ENCODE measurements at regions of chr1 and their contacts with region 1.

Region 1: GRCh38 chr1:26900001-26900814 is at the start of gene GPATCH3:
- DNase-seq: peak; percentile 90
- H3K4me3 Mint-ChIP-seq: peak within 1 kb of the TSS; percentile 82
- H3K27ac Mint-ChIP-seq: peak within 1 kb of the TSS; percentile 92
- H3K4me1 Mint-ChIP-seq: peaks cover 39% of the 10 kb centered on the region
- H3K27me3 Mint-ChIP-seq: no peaks in the 10 kb centered on the region
- total RNA-seq, gene GPATCH3: 16.0 to 16.7 TPM

Region 2: DNA sequence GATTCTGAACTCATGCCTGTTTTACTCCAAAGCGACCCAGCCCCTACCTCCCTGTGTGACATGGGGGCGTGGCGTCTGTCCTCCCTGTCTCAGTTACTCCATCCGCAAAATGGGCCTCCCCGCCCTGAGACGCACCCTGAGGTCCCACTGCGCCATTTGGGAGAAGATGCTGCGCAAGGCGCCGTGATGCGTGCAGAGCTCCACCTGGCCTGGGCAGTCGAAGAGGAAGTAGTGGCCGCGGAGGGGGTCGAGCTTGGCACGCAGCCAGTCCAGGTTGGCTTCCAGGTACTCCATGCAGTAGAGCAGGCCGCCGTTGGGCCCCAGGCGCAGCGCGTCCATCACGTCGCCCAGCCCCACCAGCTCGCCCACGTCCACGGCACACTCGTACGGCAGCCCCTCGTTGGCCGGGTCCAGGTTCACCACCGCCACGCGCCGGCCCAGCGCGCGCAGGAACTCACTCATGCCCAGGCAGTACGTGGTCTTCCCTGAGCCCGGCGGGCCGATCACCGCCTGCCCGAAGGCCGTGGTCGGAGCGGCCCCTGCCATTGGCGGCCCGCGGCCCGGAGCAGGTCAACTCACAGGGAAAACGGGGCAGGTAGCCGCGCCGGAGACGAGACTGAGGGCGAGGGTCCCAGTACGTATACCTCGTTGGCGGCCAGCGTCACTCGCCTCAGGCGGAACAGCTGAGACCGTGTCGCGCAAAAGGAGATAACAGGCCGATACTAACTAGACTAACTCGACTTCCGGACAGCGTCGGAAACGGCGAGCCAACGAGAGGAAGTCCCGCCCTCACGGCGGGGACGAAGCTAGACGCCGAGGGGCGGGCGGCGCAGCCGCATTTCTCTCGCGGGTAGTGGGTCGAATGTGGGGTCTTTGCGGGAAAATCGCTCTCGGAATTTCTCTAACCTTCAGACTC is 10.4 kb before region 1 on chr1 and contains the start of gene GPN2:
- CTCF ChIA-PET with region 1: interaction called, 12 read pairs
- POLR2A ChIA-PET with region 1: interaction called, 97 read pairs
- DNase-seq: peak; percentile 82
- H3K4me3 Mint-ChIP-seq: peak within 1 kb of the TSS; percentile 99
- H3K27ac Mint-ChIP-seq: peak within 1 kb of the TSS; percentile 94
- H3K4me1 Mint-ChIP-seq: peaks cover 28% of the 10 kb centered on the region
- H3K27me3 Mint-ChIP-seq: no peaks in the 10 kb centered on the region
- total RNA-seq, gene GPN2: 29.4 to 31.4 TPM

Region 3: DNA sequence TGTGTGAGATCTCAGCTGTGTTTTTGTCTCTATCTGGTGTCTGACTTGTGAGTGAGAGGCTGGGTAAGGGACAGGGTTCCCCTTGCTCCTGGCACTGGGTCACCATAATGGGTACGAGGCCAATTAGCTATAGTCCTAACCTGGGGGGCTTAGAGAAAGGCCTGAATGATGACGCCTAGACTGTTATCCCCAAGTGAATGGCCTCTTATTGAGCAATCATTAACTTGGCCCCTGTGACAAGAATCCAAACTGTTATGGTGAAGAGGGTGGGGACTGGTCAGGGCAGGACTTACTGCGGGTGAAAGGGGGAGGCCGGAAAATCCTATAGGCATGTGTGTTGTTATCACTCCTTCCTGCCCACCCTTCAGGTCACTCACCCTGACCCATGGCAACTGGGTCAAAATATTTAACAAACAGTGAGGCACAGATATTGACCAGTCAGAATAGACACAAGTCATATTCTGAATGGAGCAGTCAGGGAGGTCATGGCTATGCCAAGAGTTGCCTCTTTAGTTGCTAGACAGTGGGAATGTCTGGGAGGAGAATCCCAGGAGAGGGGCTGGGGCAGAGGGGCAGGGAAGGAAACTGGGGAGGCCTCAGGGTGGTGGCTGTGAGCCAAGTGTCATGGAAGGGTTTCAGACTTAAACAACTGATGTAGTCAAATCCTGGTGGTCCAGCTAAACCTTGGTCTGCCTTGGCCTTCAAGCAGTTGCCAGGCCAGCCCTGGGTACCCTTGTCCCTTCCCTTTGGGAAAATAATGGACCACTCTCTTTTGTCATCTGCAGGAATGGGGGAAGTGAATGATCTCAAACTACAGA is 10.3 kb after region 1 on chr1:
- CTCF ChIA-PET with region 1: interaction called, 4 read pairs
- POLR2A ChIA-PET with region 1: interaction called, 15 read pairs
- DNase-seq: no peak
- H3K4me3 Mint-ChIP-seq: no peak overlapping the region
- H3K27ac Mint-ChIP-seq: no peak overlapping the region
- H3K4me1 Mint-ChIP-seq: no peaks in the 10 kb centered on the region
- H3K27me3 Mint-ChIP-seq: peaks cover 11% of the 10 kb centered on the region

Region 4: DNA sequence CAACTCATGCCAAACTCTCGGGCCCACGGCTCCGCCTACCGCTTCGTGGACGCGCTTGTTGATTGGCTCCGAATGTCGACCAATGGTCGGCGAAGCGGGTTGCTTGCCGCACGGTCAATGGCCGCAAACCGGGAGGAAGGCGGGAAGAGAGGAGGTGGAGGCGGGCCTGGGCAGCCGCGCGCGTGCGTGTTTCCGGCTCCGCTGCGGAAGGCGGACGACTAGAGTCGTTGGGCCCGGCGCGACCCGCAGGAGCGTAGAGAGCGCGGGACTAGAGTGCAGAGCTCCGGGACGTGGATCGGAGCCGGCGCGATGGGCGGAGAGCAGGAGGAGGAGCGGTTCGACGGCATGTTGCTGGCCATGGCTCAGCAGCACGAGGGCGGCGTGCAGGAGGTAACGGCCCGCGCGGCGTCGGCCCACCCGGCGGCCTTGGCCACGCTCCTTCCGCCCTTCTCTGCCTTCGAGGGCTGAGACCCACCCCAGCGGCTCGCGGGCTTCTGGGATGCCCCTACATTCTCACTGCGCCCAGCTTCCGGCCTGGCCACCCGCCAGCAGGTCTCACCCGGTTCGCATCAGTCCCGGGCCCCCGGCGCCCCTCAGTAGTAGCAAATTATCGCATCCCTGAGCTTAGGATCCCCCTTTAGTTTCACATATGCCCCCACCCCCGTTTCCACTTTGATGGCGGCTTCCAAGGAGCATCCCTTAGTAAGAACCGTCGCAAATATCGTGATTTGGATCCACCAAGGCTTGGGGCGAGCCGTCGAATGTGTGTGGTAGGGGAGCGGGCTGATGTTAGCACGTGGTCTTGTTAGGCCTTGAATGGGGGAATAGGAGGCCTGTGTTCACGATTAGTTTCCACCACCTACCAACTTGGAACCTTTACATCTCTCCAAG is 21.6 kb after region 1 on chr1 and contains the start of gene NUDC:
- CTCF ChIA-PET with region 1: interaction called, 6 read pairs
- POLR2A ChIA-PET with region 1: interaction called, 34 read pairs
- DNase-seq: peak; percentile 98
- H3K4me3 Mint-ChIP-seq: peak within 1 kb of the TSS; percentile 97
- H3K27ac Mint-ChIP-seq: peak within 1 kb of the TSS; percentile 89
- H3K4me1 Mint-ChIP-seq: peaks cover 40% of the 10 kb centered on the region
- H3K27me3 Mint-ChIP-seq: no peaks in the 10 kb centered on the region
- total RNA-seq, gene NUDC: 55.5 to 56.1 TPM